ENCODE measurements at regions of chr9 and their contacts with region 1.

Region 1: GRCh38 chr9:133184962-133185361 is 21.2 kb upstream of the GBGT1 start:
- DNase-seq: peak; percentile 86
- H3K4me3 Mint-ChIP-seq: peak overlapping the region; percentile 16
- H3K27ac Mint-ChIP-seq: peak overlapping the region; percentile 75
- H3K4me1 Mint-ChIP-seq: peaks cover 20% of the 10 kb centered on the region
- H3K27me3 Mint-ChIP-seq: peaks cover 53% of the 10 kb centered on the region

Region 2: DNA sequence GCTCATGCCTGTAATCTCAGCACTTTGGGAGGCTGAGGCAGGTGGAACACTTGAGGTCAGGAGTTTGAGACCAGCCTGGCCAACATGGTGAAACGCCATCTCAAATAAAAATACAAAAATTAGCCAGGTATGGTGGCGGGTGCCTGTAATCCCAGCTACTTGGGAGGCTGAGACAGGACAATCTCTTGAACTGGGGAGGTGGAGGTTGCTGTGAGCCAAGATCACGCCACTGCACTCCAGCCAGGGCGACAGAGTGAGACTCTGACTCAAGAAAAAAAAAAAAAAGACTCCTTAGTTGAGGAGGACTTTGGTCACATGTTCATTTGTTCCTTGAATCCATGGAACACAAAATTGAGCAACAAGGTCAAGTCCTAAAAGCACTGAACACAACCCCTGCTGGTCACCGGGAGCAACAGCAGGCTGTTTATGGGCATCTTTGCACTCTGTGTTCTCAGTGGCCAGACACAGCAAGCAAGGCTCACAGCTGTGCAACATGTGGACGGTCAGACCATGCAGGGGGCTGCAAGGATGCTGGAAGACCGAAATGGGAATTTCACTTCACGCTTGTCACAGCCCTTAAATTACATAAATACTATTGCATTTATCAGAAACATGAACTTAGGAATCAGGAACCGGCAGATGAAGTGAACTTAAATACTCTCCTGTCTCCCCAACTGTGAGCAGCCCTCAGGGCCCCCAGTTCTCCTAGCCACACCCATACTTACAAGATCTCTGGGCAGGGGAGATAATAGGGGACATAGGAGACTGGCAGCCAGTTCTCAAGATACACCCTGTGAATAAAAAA is 24.0 kb before region 1 on chr9:
- intact Hi-C with region 1: no loop called
- DNase-seq: peak; percentile 82
- H3K4me3 Mint-ChIP-seq: peak overlapping the region; percentile 55
- H3K27ac Mint-ChIP-seq: no peak overlapping the region
- H3K4me1 Mint-ChIP-seq: peaks cover 4% of the 10 kb centered on the region
- H3K27me3 Mint-ChIP-seq: peaks cover 4% of the 10 kb centered on the region

Region 3: DNA sequence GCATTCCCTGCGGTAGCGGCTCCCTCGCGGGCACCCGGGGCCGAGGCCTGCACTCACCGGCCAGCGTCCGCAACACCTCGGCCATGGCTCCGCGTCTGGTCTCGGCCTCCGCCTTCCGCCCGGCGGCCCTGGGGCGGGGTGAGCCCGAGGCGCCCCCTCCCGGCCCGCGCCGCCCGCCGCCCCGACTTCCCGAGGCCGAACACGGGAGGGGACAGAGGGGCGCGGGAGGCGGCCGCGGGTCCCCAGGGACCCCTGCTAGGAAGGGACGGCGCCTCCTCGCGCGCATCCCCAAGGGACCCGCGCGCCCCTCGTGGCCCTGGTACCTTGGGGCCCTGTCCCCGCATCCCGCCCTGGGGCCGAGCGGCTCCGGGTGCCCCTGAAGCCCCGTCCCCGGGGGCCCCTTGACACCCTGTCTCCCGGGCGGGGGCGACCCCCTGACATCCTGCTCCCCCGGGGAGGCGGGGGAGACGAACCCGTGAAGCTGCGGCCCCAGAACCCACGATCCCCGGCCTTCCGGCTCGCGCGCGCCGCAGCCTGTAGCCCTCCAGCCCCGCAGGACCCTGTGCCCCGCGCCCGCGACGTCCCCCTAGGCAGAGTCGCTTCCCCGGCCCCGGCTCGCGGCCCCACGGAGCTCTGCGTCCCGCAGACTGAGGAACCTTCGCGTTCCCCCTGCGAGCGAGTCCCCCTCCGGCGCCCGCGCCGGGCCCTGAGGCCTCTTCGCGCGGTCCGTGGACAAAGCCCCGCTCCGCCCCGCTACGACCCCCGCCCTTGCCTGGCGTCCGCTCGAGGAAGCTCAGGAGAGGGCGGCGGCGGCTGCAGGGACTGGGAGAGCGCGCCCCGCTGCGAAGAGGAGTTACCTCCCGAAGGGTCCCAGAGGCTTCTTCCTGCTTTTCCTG is 90.4 kb after region 1 on chr9 and contains the start of gene ABO:
- intact Hi-C with region 1: loop called (anchors 10 kb)
- DNase-seq: peak; percentile 75
- H3K4me3 Mint-ChIP-seq: peak within 1 kb of the TSS; percentile 31
- H3K27ac Mint-ChIP-seq: no peak within 1 kb of the TSS
- H3K4me1 Mint-ChIP-seq: peaks cover 6% of the 10 kb centered on the region
- H3K27me3 Mint-ChIP-seq: peaks cover 35% of the 10 kb centered on the region
- total RNA-seq, gene ABO: 0.36 and 0.58 TPM in 2 replicates

Region 4: GRCh38 chr9:133335878-133336811 is 151.2 kb after region 1 on chr9 and contains the start of gene SURF6:
- intact Hi-C with region 1: loop called (anchors 2 kb)
- DNase-seq: peak; percentile 99
- H3K4me3 Mint-ChIP-seq: peak within 1 kb of the TSS; percentile 89
- H3K27ac Mint-ChIP-seq: peak within 1 kb of the TSS; percentile 90
- H3K4me1 Mint-ChIP-seq: peaks cover 18% of the 10 kb centered on the region
- H3K27me3 Mint-ChIP-seq: no peaks in the 10 kb centered on the region
- total RNA-seq, gene SURF6: 27.4 and 28.8 TPM in 2 replicates

Region 5: DNA sequence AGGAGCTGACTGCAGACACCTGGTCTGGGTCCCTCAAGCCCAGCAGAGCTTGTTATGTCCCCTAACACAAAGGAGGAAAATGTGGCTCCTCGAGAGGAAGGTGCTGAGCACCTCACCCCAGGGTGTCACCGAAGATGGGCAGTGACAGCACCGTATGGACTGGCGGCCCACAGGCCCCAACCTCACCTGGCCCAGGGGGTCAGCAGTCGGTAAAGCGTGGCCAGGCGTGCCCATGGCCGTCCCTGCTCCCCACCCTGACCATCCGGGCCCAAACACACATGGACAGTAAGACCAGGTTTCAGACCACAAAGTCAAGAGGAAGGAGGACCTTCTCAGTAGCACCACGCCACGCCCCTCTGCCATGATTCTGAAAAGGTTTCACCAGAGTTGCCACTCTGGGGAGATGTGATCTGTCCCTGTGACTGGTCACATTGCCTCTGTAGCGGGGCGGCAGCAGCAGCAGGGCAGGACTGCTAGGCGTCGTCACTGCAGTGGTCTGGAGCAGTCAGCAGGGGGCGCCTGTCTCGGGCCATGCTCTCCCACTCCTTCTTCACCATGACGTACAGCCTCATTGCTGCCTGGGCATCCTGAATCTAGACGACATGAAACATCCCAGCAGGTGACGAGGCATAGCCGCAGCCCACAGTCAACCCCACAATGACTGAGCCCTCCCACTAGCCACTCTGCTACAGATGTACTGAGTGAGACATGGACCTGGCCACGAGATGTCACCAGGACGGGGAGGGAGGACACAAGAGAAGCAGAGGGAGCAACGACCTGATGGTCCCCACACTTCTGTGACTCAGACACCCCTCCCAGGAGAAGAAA is 221.7 kb after region 1 on chr9:
- intact Hi-C with region 1: loop called (anchors 5 kb)
- DNase-seq: peak; percentile 92
- H3K4me3 Mint-ChIP-seq: no peak overlapping the region
- H3K27ac Mint-ChIP-seq: peak overlapping the region; percentile 68
- H3K4me1 Mint-ChIP-seq: peaks cover 12% of the 10 kb centered on the region
- H3K27me3 Mint-ChIP-seq: no peaks in the 10 kb centered on the region

Region 6: GRCh38 chr9:133485361-133486260 is 300.6 kb after region 1 on chr9:
- intact Hi-C with region 1: loop called (anchors 1 kb)
- DNase-seq: no peak
- H3K4me3 Mint-ChIP-seq: peak overlapping the region; percentile 23
- H3K27ac Mint-ChIP-seq: no peak overlapping the region
- H3K4me1 Mint-ChIP-seq: no peaks in the 10 kb centered on the region
- H3K27me3 Mint-ChIP-seq: peaks cover 13% of the 10 kb centered on the region

Region 7: DNA sequence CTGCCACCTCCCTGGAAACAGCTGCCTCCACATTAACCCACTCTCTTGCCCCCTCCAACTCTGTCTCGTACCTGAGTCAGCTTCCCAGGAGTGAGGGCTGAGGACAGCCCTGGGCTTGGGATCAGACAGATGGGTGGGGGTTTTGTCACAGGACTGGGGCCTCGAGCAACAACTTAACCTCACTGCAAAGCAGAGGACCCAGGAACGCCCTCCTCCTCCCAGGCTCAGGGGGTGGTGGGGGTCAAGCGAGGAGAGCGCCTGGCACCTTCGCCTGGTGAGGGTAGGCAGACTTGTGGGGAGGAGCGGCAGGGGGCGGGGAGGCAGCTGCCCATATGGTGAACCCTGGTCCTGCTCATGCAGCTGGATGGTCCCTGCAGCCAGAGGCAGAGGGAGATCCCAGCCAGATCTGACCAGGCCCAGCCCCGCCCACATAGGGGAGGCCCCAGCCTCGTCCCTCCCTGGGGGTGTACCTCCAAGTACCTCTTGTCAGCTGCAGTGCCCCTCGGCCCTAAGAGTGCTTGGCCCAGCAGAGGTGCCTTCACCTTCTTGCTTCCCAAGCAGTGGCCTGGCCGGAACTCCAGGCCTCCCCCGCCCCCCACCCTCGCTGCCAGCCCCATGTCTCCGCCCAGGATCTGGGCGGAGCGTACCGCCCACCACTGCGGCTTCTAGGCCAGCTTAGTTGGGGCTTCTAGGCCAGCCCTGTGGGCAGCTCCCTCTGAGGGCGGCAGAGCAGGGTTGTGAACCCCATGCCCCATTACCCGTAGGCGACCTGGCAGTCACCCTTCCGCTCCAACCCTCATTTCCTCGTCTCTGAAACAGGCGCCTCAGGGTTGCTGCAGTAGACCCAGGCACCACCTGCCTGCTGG is 553.0 kb after region 1 on chr9 and contains the start of gene SARDH:
- intact Hi-C with region 1: loop called (anchors 10 kb)
- DNase-seq: peak; percentile 77
- H3K4me3 Mint-ChIP-seq: no peak within 1 kb of the TSS
- H3K27ac Mint-ChIP-seq: no peak within 1 kb of the TSS
- H3K4me1 Mint-ChIP-seq: no peaks in the 10 kb centered on the region
- H3K27me3 Mint-ChIP-seq: no peaks in the 10 kb centered on the region
- total RNA-seq, gene SARDH: 0.54 and 0.68 TPM in 2 replicates